ENCODE measurements at regions of chr18 and their contacts with region 1.

Region 1: GRCh38 chr18:55589625-55590291 is 1.8 kb upstream of the TCF4 start:
- DNase-seq: peak; percentile 98
- H3K4me3 ChIP-seq: peak overlapping the region; percentile 70 to 85
- H3K27ac ChIP-seq: peak overlapping the region; percentile 76 to 80
- H3K4me1 ChIP-seq: peaks cover 0 to 14% (median 3%) of the 10 kb centered on the region in 4 donors
- H3K27me3 ChIP-seq: no peaks in the 10 kb centered on the region
- CTCF ChIP-seq: no peak

Region 2: GRCh38 chr18:54972690-54973445 is 616.9 kb before region 1 on chr18:
- intact Hi-C with region 1: no loop called
- DNase-seq: no peak
- H3K4me3 ChIP-seq: no peak overlapping the region
- H3K27ac ChIP-seq: no peak overlapping the region
- H3K4me1 ChIP-seq: no peaks in the 10 kb centered on the region
- H3K27me3 ChIP-seq: no peaks in the 10 kb centered on the region
- CTCF ChIP-seq: no peak

Region 3: GRCh38 chr18:55243857-55244256 is 345.9 kb before region 1 on chr18:
- intact Hi-C with region 1: loop called (anchors 5 kb)
- DNase-seq: peak in 1 of 2 donors; percentile 59
- H3K4me3 ChIP-seq: peak overlapping the region; percentile 27 to 36
- H3K27ac ChIP-seq: peak overlapping the region; percentile 49 to 69
- H3K4me1 ChIP-seq: peaks cover 0 to 51% (median 22%) of the 10 kb centered on the region in 4 donors
- H3K27me3 ChIP-seq: no peaks in the 10 kb centered on the region
- CTCF ChIP-seq: no peak

Region 4: DNA sequence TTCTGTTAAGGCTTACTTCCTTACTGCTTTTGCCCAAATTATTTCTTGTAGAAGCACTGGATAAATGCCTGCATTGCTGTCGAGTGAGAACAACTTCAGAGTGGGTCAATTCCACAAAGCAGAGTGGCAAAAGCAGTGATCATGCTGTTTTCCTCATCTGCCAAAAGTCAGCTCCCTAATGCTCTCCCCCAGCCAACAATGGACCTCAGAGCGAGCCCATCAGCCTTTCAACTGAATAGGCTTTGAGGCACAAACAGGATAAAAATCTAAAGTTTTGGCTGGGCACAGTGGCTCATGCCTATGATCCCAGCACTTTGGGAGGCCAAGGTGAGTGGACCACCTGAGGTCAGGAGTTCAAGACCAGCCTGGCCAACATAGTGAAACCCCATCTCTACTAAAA is 224.4 kb before region 1 on chr18:
- intact Hi-C with region 1: no loop called
- DNase-seq: no peak
- H3K4me3 ChIP-seq: no peak overlapping the region
- H3K27ac ChIP-seq: no peak overlapping the region
- H3K4me1 ChIP-seq: no peaks in the 10 kb centered on the region
- H3K27me3 ChIP-seq: no peaks in the 10 kb centered on the region
- CTCF ChIP-seq: no peak

Region 5: DNA sequence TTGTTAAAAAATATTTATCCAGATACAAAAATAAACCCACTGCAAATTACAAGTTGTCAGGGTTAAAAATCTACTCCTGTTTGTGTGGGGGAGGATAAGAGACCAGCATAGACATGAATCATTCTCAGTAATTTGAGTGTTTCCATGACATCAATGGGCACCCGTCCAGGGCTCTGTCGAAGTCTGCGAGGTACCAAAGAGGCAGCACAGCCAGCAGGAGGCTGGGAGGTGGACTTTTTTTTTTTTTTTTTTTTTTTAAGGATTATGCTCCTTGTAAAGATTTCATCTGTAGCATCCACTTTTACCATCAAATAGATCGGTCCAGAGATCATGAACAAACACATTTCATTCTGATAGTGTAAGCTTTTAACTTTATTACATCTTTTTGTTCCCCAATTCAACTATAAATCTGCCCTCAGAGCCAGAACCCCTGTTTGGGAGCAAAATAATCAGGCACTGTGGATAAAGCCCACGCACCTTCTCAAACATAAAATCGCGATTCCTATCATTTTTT is 183.8 kb before region 1 on chr18:
- intact Hi-C with region 1: loop called (anchors 5 kb)
- DNase-seq: peak; percentile 89 to 91
- H3K4me3 ChIP-seq: peak overlapping the region in 1 of 2 donors; percentile 25
- H3K27ac ChIP-seq: peak overlapping the region; percentile 56 to 58
- H3K4me1 ChIP-seq: peaks cover 0 to 40% (median 10%) of the 10 kb centered on the region in 4 donors
- H3K27me3 ChIP-seq: no peaks in the 10 kb centered on the region
- CTCF ChIP-seq: no peak